Naive thymus-derived CD4-positive, alpha-beta T cell (primary cell): ENCODE measurements at regions of chr4 and their contacts with region 1.

Region 1: GRCh38 chr4:16196478-16197393 is 29.5 kb downstream of the TAPT1 start:
- DNase-seq: peak in 6 of 9 donors; percentile 8 to 28 (median 20)
- ATAC-seq: peak; percentile 78
- H3K4me3 ChIP-seq: no peak overlapping the region
- H3K4me3 Mint-ChIP-seq: peak overlapping the region in 9 of 10 donors; percentile 0 to 67 (median 28)
- H3K27ac ChIP-seq: no peak overlapping the region
- H3K27ac Mint-ChIP-seq: peak overlapping the region in 7 of 9 donors; percentile 2 to 86 (median 32)
- H3K4me1 ChIP-seq: no peaks in the 10 kb centered on the region
- H3K4me1 Mint-ChIP-seq: peaks cover 14 to 50% (median 34%) of the 10 kb centered on the region in 7 donors
- H3K27me3 ChIP-seq: no peaks in the 10 kb centered on the region
- H3K27me3 Mint-ChIP-seq: no peaks in the 10 kb centered on the region

Region 2: GRCh38 chr4:15963001-15963451 is 233.7 kb before region 1 on chr4 and contains the start of gene FGFBP2:
- CTCF ChIA-PET with region 1: no interaction called
- POLR2A ChIA-PET with region 1: no interaction called
- intact Hi-C with region 1: loop called in 1 of 2 experiments (anchors 5 kb)
- DNase-seq: peak; percentile 10 to 73 (median 57)
- ATAC-seq: peak; percentile 78
- H3K4me3 ChIP-seq: no peak within 1 kb of the TSS
- H3K4me3 Mint-ChIP-seq: peak within 1 kb of the TSS in 9 of 10 donors; percentile 33 to 83 (median 56)
- H3K27ac ChIP-seq: no peak within 1 kb of the TSS
- H3K27ac Mint-ChIP-seq: peak within 1 kb of the TSS in 5 of 9 donors; percentile 43 to 59 (median 51)
- H3K4me1 ChIP-seq: peaks cover 5 to 15% of the 10 kb centered on the region in 2 donors
- H3K4me1 Mint-ChIP-seq: peaks cover 6 to 26% (median 18%) of the 10 kb centered on the region in 7 donors
- H3K27me3 ChIP-seq: no peaks in the 10 kb centered on the region
- H3K27me3 Mint-ChIP-seq: peaks cover 6 to 14% (median 8%) of the 10 kb centered on the region in 5 donors
- total RNA-seq, gene FGFBP2: 1.2 to 54.8 (median 4.5) TPM

Region 3: DNA sequence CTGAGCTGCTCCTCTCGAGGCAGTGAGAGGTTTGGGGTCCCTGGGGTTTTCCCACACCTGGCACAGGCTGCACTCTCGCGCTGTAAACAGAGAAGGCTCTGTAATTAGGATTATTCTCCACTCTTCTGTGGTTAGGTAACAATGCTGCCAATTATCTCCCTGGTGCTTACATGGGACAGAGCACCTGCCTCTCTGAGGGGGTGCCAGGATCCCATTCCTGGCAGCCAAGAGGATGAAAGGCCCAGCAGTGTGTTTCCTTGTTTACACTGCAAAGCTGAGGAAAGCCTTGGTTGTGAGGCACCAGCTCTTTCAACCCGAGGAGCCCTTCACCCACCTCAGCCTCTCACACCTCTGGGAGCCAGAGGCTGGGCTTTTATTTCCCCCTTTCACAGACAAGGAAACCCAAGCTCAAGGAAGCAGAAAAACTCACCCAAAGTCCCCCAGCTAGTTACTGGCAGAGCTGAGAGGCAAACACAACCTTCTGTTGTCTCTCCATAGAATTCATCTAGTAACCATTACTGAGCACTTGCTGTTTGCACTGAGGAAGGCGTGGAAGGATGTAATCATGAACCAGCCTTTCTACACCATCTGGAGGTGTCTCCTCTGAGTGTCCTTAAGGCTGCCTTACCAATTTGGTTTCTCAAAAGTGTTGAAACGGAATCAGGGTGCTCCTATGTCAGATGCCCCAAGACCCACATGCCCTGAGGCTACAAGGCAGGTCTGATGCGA is 73.2 kb before region 1 on chr4:
- CTCF ChIA-PET with region 1: no interaction called
- POLR2A ChIA-PET with region 1: no interaction called
- intact Hi-C with region 1: loop called in 1 of 2 experiments (anchors 2 kb)
- DNase-seq: no peak
- ATAC-seq: no peak
- H3K4me3 ChIP-seq: no peak overlapping the region
- H3K4me3 Mint-ChIP-seq: peak overlapping the region in 7 of 10 donors; percentile 3 to 69 (median 49)
- H3K27ac ChIP-seq: peak overlapping the region; percentile 37
- H3K27ac Mint-ChIP-seq: peak overlapping the region in 6 of 9 donors; percentile 23 to 81 (median 62)
- H3K4me1 ChIP-seq: peaks cover 0 to 19% of the 10 kb centered on the region in 2 donors
- H3K4me1 Mint-ChIP-seq: peaks cover 9 to 49% (median 37%) of the 10 kb centered on the region in 7 donors
- H3K27me3 ChIP-seq: peaks cover 0 to 3% of the 10 kb centered on the region in 2 donors
- H3K27me3 Mint-ChIP-seq: no peaks in the 10 kb centered on the region

Region 4: GRCh38 chr4:16183604-16184003 is 13.1 kb before region 1 on chr4:
- CTCF ChIA-PET with region 1: interaction called, 8 read pairs
- POLR2A ChIA-PET with region 1: no interaction called
- intact Hi-C with region 1: loop called in 1 of 2 experiments (anchors 2 kb)
- DNase-seq: no peak
- ATAC-seq: no peak
- H3K4me3 ChIP-seq: no peak overlapping the region
- H3K4me3 Mint-ChIP-seq: no peak overlapping the region
- H3K27ac ChIP-seq: no peak overlapping the region
- H3K27ac Mint-ChIP-seq: no peak overlapping the region
- H3K4me1 ChIP-seq: no peaks in the 10 kb centered on the region
- H3K4me1 Mint-ChIP-seq: peaks cover 0 to 1% (median 0%) of the 10 kb centered on the region in 7 donors
- H3K27me3 ChIP-seq: no peaks in the 10 kb centered on the region
- H3K27me3 Mint-ChIP-seq: no peaks in the 10 kb centered on the region

Region 5: GRCh38 chr4:16264798-16265197 is 68.1 kb after region 1 on chr4:
- CTCF ChIA-PET with region 1: interaction called, 15 read pairs
- POLR2A ChIA-PET with region 1: no interaction called
- intact Hi-C with region 1: loop called (anchors 1 to 2 kb)
- DNase-seq: peak in 7 of 9 donors; percentile 14 to 59 (median 34)
- ATAC-seq: peak; percentile 40
- H3K4me3 ChIP-seq: no peak overlapping the region
- H3K4me3 Mint-ChIP-seq: no peak overlapping the region
- H3K27ac ChIP-seq: no peak overlapping the region
- H3K27ac Mint-ChIP-seq: no peak overlapping the region
- H3K4me1 ChIP-seq: peaks cover 0 to 3% of the 10 kb centered on the region in 2 donors
- H3K4me1 Mint-ChIP-seq: peaks cover 0 to 11% (median 4%) of the 10 kb centered on the region in 7 donors
- H3K27me3 ChIP-seq: no peaks in the 10 kb centered on the region
- H3K27me3 Mint-ChIP-seq: peaks cover 0 to 2% (median 0%) of the 10 kb centered on the region in 5 donors